ENCODE measurements at regions of chr9 and their contacts with region 1.

Region 1: DNA sequence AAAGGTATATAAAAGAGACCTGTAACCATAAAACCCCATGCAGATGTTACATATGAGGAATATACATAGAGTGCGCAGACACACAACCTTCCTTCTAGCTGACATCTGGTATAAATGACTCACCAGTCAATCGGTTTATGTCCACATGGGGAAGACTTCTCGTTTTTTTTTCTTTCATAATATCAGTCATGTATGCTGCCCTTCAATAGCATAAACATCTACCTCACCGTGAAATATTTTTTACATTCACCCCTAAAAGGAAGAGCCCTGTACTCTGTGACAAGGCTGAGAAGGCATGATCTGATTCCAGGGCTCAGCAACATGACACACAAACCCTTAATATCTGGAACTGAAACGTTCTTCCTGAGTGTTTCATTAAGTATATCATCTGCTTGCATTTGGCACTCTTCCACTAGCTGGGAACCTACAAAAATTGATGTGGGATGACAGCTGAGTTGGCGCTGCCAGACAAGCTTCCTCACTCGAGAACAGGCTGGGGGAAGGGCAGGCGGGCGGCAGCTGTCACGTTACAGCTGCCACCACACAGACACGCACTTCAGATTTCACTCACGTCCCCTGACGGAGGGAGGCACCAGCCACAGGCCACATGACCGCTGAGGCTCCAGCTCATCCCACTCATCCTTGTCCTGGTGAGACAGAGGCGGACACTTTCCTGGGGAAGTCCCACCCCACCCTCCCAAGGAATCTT is 74.2 kb downstream of the SHB start:
- DNase-seq: peak; percentile 58
- H3K4me3 ChIP-seq: peak overlapping the region in 1 of 2 experiments; percentile 3; a peak in 1 of 4 replicates
- H3K27ac ChIP-seq: peak overlapping the region; percentile 75 to 97
- H3K4me1 ChIP-seq: peaks cover 48 to 70% of the 10 kb centered on the region in 2 experiments; a peak in 3 of 4 replicates
- H3K27me3 ChIP-seq: no peaks in the 10 kb centered on the region
- CTCF ChIP-seq: no peak
- EP300 ChIP-seq: peak; percentile 34 to 77; a peak in 2 of 4 replicates
- RAD21 ChIP-seq: peak; percentile 37

Region 2: GRCh38 chr9:38068866-38069629 is 74.3 kb after region 1 on chr9 and contains the start of gene SHB:
- CTCF ChIA-PET with region 1: interaction called, 12 read pairs
- POLR2A ChIA-PET with region 1: no interaction called
- DNase-seq: peak; percentile 95
- H3K4me3 ChIP-seq: peak within 1 kb of the TSS; percentile 76 to 78
- H3K27ac ChIP-seq: peak within 1 kb of the TSS; percentile 79 to 91
- H3K4me1 ChIP-seq: peaks cover 21 to 49% of the 10 kb centered on the region in 2 experiments; a peak in 3 of 4 replicates
- H3K27me3 ChIP-seq: no peaks in the 10 kb centered on the region
- CTCF ChIP-seq: peak; percentile 54
- EP300 ChIP-seq: no peak
- RAD21 ChIP-seq: no peak
- polyA plus RNA-seq, gene SHB: 20.5 and 26.0 TPM in 2 replicates

Measured in SK-N-SH (cell line).